Caco-2 (cell line): ENCODE measurements at regions of chr3 and their contacts with region 1.

Region 1: DNA sequence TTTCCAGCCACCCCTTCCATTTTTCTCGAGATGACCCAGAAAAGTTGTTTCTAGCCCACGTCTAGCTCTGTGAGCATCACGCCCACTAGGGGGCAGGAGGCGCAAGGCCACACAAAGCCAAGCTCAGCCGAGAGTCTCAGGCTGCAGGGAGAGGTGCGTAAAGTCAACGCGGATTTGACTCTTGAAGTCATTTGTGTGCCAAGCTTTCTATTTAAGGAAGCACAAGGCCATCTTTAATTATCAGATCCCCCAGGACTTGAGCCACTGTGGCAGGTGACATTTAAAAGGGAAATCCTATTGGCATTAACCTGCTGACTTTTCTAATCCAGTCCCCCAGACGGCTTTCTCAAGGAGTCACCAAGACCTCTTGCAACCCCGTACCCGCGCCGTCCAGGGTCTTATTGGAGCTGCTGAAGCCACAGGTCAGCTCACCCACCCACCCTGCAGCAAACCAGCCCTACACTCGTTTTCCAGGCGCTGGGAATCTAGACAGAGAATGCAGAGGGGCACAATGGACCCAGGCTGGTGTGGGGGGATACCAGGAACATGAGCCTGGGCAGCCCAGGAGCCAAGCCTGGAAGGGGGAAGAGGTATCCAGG is 62.1 kb downstream of the CAPN7 start:
- DNase-seq: peak; percentile 76 to 85
- H3K4me3 ChIP-seq: no peak overlapping the region
- H3K4me3 Mint-ChIP-seq: no peak overlapping the region
- H3K27ac Mint-ChIP-seq: no peak overlapping the region
- H3K4me1 ChIP-seq: 0 out of 2 replicates have a peak, but pooled peaks cover 4% of the 10 kb centered on the region
- H3K4me1 Mint-ChIP-seq: peaks cover 7% of the 10 kb centered on the region
- H3K27me3 ChIP-seq: no peaks in the 10 kb centered on the region
- H3K27me3 Mint-ChIP-seq: no peaks in the 10 kb centered on the region
- CTCF ChIP-seq: peak; percentile 79 to 94

Region 2: GRCh38 chr3:15108082-15108545 is 160.0 kb before region 1 on chr3:
- CTCF ChIA-PET with region 1: interaction called, 3 read pairs
- POLR2A ChIA-PET with region 1: no interaction called
- intact Hi-C with region 1: loop called (anchors 1 kb)
- DNase-seq: peak; percentile 72 to 84
- H3K4me3 ChIP-seq: no peak overlapping the region
- H3K4me3 Mint-ChIP-seq: no peak overlapping the region
- H3K27ac Mint-ChIP-seq: no peak overlapping the region
- H3K4me1 ChIP-seq: peaks cover 9% of the 10 kb centered on the region; the same call in 1 of the 2 replicates
- H3K4me1 Mint-ChIP-seq: peaks cover 12% of the 10 kb centered on the region
- H3K27me3 ChIP-seq: no peaks in the 10 kb centered on the region
- H3K27me3 Mint-ChIP-seq: peaks cover 3% of the 10 kb centered on the region
- CTCF ChIP-seq: peak; percentile 85 to 88

Region 3: DNA sequence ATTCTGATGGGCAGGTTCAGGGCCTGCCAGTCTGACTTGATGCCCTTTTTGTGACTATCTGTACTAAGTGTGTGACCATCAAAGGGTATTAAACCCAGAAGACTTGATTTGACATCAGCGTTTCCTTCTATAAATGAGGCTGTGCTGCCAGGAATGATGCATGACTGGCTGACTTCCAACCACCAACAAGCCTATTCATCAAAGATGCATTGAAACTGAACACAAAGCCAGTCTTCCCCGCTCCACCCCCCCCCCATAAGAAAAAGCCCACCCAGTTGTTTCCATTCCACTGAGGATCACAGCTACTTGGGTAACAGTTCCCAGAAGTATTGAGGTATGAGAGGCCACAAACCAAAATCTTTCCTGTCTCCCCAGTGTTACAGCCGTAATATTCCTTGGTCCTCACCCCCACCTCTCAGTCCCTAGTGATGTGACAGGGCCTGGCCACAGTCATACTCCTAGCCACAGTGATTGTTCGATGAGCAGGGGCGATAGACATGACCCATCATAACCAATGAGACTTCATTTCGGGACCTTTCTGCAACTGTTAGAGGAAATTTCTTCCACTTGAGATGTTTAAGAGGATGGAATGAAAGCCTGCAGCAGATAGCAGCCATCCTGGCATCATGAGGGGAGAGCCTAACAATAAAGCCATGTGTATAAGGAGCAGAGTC is 41.7 kb after region 1 on chr3:
- CTCF ChIA-PET with region 1: interaction called, 10 read pairs
- POLR2A ChIA-PET with region 1: no interaction called
- intact Hi-C with region 1: loop called (anchors 1 kb)
- DNase-seq: no peak
- H3K4me3 ChIP-seq: no peak overlapping the region
- H3K4me3 Mint-ChIP-seq: peak overlapping the region; percentile 45
- H3K27ac Mint-ChIP-seq: peak overlapping the region; percentile 92
- H3K4me1 ChIP-seq: peaks cover 80% of the 10 kb centered on the region
- H3K4me1 Mint-ChIP-seq: peaks cover 39% of the 10 kb centered on the region
- H3K27me3 ChIP-seq: no peaks in the 10 kb centered on the region
- H3K27me3 Mint-ChIP-seq: no peaks in the 10 kb centered on the region
- CTCF ChIP-seq: no peak

Region 4: GRCh38 chr3:15332405-15333098 is 64.4 kb after region 1 on chr3 and contains the start of gene SH3BP5:
- CTCF ChIA-PET with region 1: interaction called, 28 read pairs
- POLR2A ChIA-PET with region 1: no interaction called
- intact Hi-C with region 1: loop called (anchors 1 kb)
- DNase-seq: peak; percentile 64 to 83
- H3K4me3 ChIP-seq: peak within 1 kb of the TSS; percentile 93
- H3K4me3 Mint-ChIP-seq: peak within 1 kb of the TSS; percentile 91
- H3K27ac Mint-ChIP-seq: peak within 1 kb of the TSS; percentile 82
- H3K4me1 ChIP-seq: peaks cover 16% of the 10 kb centered on the region
- H3K4me1 Mint-ChIP-seq: peaks cover 3% of the 10 kb centered on the region
- H3K27me3 ChIP-seq: no peaks in the 10 kb centered on the region
- H3K27me3 Mint-ChIP-seq: no peaks in the 10 kb centered on the region
- CTCF ChIP-seq: peak; percentile 49 to 62
- total RNA-seq, gene SH3BP5: 20.8 and 26.1 TPM in 2 replicates

Region 5: GRCh38 chr3:15405448-15406050 is 137.4 kb after region 1 on chr3:
- CTCF ChIA-PET with region 1: interaction called, 24 read pairs
- POLR2A ChIA-PET with region 1: no interaction called
- intact Hi-C with region 1: loop called (anchors 1 kb)
- DNase-seq: peak in 1 of 2 experiments; percentile 39
- H3K4me3 ChIP-seq: no peak overlapping the region
- H3K4me3 Mint-ChIP-seq: no peak overlapping the region
- H3K27ac Mint-ChIP-seq: no peak overlapping the region
- H3K4me1 ChIP-seq: no peaks in the 10 kb centered on the region
- H3K4me1 Mint-ChIP-seq: no peaks in the 10 kb centered on the region
- H3K27me3 ChIP-seq: no peaks in the 10 kb centered on the region
- H3K27me3 Mint-ChIP-seq: no peaks in the 10 kb centered on the region
- CTCF ChIP-seq: peak; percentile 42 to 58